Activated T-helper 1 cell treated with anti-CD3 and anti-CD28 coated beads, Interleukin-12 subunit alpha, Interleukin-12 subunit beta, Interleukin-2, Interleukin-4 antibody, amounts not matched to agents 30 ng/mL and 10 ng/mL and 1 ng/mL, durations not matched to agents 14 hours and 24 hours and 36 hours (primary cell): ENCODE measurements at regions of chr2 and their contacts with region 1.

Region 1: DNA sequence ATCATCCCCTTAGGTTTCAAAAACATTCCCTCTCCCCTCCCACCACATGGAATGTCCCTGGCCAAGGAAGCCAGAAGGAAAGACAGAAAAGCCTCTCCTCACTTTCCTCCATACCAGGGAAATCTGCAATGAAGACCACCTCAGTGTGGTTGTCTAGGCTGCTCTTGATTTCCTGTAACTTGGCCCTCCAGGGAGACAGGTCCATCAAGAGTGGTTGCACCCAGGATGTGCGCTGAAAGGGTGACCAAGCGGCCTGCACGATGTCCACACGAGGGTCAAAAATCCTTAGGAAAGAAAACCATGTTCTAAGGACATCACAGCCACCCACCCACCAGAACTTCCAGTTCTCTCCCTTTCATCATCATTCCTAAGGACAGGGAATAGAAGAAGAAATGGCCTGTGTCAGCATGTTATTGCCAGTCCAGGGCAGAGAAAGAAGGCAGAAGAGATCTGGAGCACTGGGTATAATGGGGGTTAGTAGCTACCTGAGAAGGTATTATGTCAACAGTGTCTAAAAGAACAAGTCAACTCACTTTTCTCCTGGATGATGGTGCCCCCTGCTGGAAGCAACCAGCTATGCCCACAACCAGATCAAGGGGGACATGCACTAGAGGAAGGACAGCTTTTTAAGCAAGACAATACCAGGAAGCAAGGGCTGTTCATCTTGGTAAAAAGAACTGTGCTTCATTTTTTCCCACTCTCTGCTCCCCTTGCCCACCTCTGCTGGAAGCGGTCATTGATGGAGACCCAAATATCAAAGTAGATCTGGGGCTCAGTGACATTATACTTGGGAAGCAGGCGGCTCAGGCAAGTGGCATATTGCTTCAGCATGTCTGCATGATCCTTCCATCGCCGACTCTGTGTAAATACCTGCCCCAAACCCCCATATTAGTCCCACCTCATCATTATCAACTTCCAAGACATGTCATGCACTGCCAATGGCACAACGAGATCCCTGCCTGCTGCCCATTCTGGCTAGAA is 9.3 kb downstream of the GGCX start:
- DNase-seq: peak; percentile 80
- H3K4me3 Mint-ChIP-seq: no peak overlapping the region
- H3K27ac Mint-ChIP-seq: no peak overlapping the region
- H3K4me1 Mint-ChIP-seq: peaks cover 8% of the 10 kb centered on the region
- H3K27me3 Mint-ChIP-seq: no peaks in the 10 kb centered on the region

Region 2: DNA sequence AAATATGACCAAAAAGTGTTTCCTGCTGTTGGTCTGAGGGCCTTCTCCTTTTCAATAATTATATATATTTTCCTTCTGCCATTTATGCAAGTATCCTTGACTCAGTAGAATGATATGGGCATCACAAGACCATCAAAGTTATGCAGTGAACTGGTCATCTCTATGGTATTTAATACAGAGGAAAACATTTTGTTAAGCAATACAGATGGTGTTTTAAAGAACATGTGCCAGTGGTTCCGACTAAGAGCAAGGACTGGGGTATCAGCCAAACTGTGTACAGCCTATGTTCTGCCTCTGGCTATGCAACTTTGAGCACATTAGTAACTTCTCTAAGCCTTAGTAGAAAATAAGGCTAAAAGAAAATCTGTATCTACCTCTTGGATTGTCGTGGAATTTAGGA is 850.1 kb before region 1 on chr2:
- intact Hi-C with region 1: no loop called
- DNase-seq: no peak
- H3K4me3 Mint-ChIP-seq: no peak overlapping the region
- H3K27ac Mint-ChIP-seq: no peak overlapping the region
- H3K4me1 Mint-ChIP-seq: no peaks in the 10 kb centered on the region
- H3K27me3 Mint-ChIP-seq: no peaks in the 10 kb centered on the region

Region 3: GRCh38 chr2:85327822-85328617 is 224.0 kb before region 1 on chr2 and contains the start of gene TGOLN2:
- intact Hi-C with region 1: loop called (anchors 2 kb)
- DNase-seq: peak; percentile 92
- H3K4me3 Mint-ChIP-seq: peak within 1 kb of the TSS; percentile 95
- H3K27ac Mint-ChIP-seq: peak within 1 kb of the TSS; percentile 99
- H3K4me1 Mint-ChIP-seq: peaks cover 34% of the 10 kb centered on the region
- H3K27me3 Mint-ChIP-seq: no peaks in the 10 kb centered on the region
- total RNA-seq, gene TGOLN2: 102 and 104 TPM in 2 replicates

Region 4: GRCh38 chr2:85390941-85391669 is 160.9 kb before region 1 on chr2:
- intact Hi-C with region 1: loop called (anchors 1 kb)
- DNase-seq: peak; percentile 54
- H3K4me3 Mint-ChIP-seq: no peak overlapping the region
- H3K27ac Mint-ChIP-seq: no peak overlapping the region
- H3K4me1 Mint-ChIP-seq: peaks cover 21% of the 10 kb centered on the region
- H3K27me3 Mint-ChIP-seq: no peaks in the 10 kb centered on the region

Region 5: GRCh38 chr2:85475799-85476490 is 76.0 kb before region 1 on chr2:
- intact Hi-C with region 1: no loop called
- DNase-seq: no peak
- H3K4me3 Mint-ChIP-seq: no peak overlapping the region
- H3K27ac Mint-ChIP-seq: no peak overlapping the region
- H3K4me1 Mint-ChIP-seq: no peaks in the 10 kb centered on the region
- H3K27me3 Mint-ChIP-seq: peaks cover 4% of the 10 kb centered on the region

Region 6: GRCh38 chr2:85577386-85578242 is 25.6 kb after region 1 on chr2 and contains the start of gene VAMP8:
- intact Hi-C with region 1: no loop called
- DNase-seq: peak; percentile 52
- H3K4me3 Mint-ChIP-seq: peak within 1 kb of the TSS; percentile 91
- H3K27ac Mint-ChIP-seq: peak within 1 kb of the TSS; percentile 86
- H3K4me1 Mint-ChIP-seq: peaks cover 35% of the 10 kb centered on the region
- H3K27me3 Mint-ChIP-seq: peaks cover 3% of the 10 kb centered on the region
- total RNA-seq, gene VAMP8: 86.1 and 89.6 TPM in 2 replicates